Activated T-helper 1 cell treated with anti-CD3 and anti-CD28 coated beads, Interleukin-12 subunit alpha, Interleukin-12 subunit beta, Interleukin-2, Interleukin-4 antibody, amounts not matched to agents 30 ng/mL and 10 ng/mL and 1 ng/mL, durations not matched to agents 14 hours and 24 hours and 36 hours (primary cell): ENCODE measurements at regions of chr2 and their contacts with region 1.

Region 1: GRCh38 chr2:134897932-134898331 is 20.7 kb upstream of the CCNT2 start:
- DNase-seq: no peak
- H3K4me3 Mint-ChIP-seq: no peak overlapping the region
- H3K27ac Mint-ChIP-seq: no peak overlapping the region
- H3K4me1 Mint-ChIP-seq: no peaks in the 10 kb centered on the region
- H3K27me3 Mint-ChIP-seq: peaks cover 15% of the 10 kb centered on the region

Region 2: GRCh38 chr2:133886735-133887660 is 1010.9 kb before region 1 on chr2:
- intact Hi-C with region 1: loop called (anchors 2 kb)
- DNase-seq: peak; percentile 9
- H3K4me3 Mint-ChIP-seq: no peak overlapping the region
- H3K27ac Mint-ChIP-seq: no peak overlapping the region
- H3K4me1 Mint-ChIP-seq: no peaks in the 10 kb centered on the region
- H3K27me3 Mint-ChIP-seq: peaks cover 5% of the 10 kb centered on the region

Region 3: GRCh38 chr2:134451347-134451630 is 446.6 kb before region 1 on chr2:
- intact Hi-C with region 1: loop called (anchors 2 kb)
- DNase-seq: no peak
- H3K4me3 Mint-ChIP-seq: no peak overlapping the region
- H3K27ac Mint-ChIP-seq: no peak overlapping the region
- H3K4me1 Mint-ChIP-seq: no peaks in the 10 kb centered on the region
- H3K27me3 Mint-ChIP-seq: no peaks in the 10 kb centered on the region

Region 4: DNA sequence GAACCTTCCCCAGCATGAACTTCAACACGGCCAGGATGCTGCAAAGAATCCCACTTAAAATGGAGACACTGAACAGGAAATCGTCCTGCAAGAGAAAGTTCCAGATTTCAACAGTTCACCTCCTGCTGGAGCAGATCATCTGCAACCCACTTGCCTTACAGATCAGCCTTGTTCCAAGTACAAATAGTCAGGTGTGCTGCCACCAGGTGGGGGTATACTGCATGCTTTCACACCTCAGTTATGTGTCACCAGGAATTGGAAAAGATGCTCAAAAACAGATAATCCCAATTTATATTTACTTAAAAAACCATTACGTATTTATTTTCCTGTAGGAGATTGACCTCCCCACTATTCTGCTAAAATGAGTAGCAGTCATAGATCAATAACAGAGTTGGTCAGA is 431.8 kb before region 1 on chr2:
- intact Hi-C with region 1: loop called (anchors 2 kb)
- DNase-seq: no peak
- H3K4me3 Mint-ChIP-seq: no peak overlapping the region
- H3K27ac Mint-ChIP-seq: no peak overlapping the region
- H3K4me1 Mint-ChIP-seq: no peaks in the 10 kb centered on the region
- H3K27me3 Mint-ChIP-seq: no peaks in the 10 kb centered on the region

Region 5: GRCh38 chr2:134782792-134783191 is 115.1 kb before region 1 on chr2:
- intact Hi-C with region 1: loop called (anchors 5 kb)
- DNase-seq: no peak
- H3K4me3 Mint-ChIP-seq: no peak overlapping the region
- H3K27ac Mint-ChIP-seq: no peak overlapping the region
- H3K4me1 Mint-ChIP-seq: no peaks in the 10 kb centered on the region
- H3K27me3 Mint-ChIP-seq: peaks cover 12% of the 10 kb centered on the region